Sigmoid colon (tissue), 7 donors: ENCODE measurements at regions of chr11 and their contacts with region 1.

Region 1: GRCh38 chr11:62560566-62561103 is 13.1 kb downstream of the EEF1G start:
- DNase-seq: peak; percentile 97
- H3K4me3 ChIP-seq: no peak overlapping the region
- H3K27ac ChIP-seq: peak overlapping the region; percentile 82 to 100 (median 92)
- H3K4me1 ChIP-seq: peaks cover 0 to 45% (median 41%) of the 10 kb centered on the region in 4 donors
- H3K27me3 ChIP-seq: no peaks in the 10 kb centered on the region
- CTCF ChIP-seq: peak in 3 of 4 experiments; percentile 84 to 90 (median 86)
- EP300 ChIP-seq: no peak
- POLR2A ChIP-seq: no peak

Region 2: DNA sequence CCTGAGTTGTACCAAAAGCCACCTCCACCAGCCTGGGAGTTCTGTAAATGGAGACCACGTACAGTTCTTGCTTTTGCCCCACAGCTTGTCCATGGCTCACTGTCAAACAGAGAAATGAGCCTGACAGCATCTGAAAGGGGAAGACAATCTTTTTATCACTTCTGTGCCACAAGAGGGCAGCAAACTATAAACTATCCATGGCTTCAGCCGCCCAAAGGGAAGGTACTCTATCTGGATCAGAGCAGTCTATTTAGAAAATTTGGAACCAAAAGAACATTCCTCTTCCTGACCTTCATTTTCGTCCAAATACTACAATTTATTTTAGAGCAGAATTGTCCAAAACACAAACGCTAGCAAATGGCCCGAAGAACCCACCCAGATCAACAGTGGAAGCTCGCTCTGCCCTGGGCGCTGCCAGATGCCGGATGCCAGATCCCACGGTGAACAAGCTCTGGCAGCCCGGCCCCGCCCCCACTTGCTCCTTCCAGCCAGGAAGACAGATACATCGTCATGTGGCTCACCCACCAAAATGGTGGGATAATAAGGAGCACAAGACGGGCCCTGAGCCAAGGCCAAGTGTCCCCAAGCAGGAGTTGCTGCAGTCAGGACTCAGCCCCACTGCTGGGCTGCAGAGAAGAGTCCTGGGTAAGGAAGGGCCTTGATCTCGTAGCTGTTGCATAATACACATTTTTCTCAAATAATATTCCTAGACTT is 165.7 kb before region 1 on chr11:
- intact Hi-C with region 1: loop called (anchors 1 kb)
- DNase-seq: peak; percentile 94
- H3K4me3 ChIP-seq: peak overlapping the region in 3 of 4 donors; percentile 29 to 41 (median 40)
- H3K27ac ChIP-seq: peak overlapping the region; percentile 82 to 95 (median 86)
- H3K4me1 ChIP-seq: peaks cover 0 to 56% (median 49%) of the 10 kb centered on the region in 4 donors
- H3K27me3 ChIP-seq: no peaks in the 10 kb centered on the region
- CTCF ChIP-seq: peak; percentile 50 to 75 (median 68)
- EP300 ChIP-seq: no peak
- POLR2A ChIP-seq: no peak